WTC11 (cell line): ENCODE measurements at regions of chr7 and their contacts with region 1.

Region 1: DNA sequence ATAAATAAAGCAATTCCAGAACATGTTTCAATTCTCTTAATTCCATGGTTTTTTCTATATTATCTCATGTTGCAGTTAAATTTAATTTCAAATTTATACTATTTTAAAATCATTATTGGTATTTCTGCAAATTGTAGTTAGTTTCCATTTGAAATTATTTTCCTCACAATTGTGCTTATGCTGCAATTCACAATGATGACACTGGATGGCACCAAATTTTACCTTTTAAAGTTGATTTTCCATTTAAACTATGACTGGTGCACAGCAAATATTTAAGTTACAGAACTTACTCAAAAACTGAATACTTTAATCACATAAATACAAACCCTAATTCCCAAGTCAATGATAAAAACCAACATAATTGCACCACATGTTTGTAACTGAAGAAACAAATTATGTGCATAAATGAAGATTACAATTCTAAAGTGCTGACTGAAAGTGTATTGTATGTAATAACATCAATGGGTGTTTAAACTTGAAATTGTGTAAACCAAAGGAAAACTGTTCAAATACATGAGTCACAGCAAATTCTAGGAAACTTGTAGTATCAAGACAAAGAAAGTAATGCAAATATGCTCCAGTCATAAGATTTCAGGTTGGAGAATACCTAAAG is 75.3 kb upstream of the AASS start:
- DNase-seq: no peak
- ATAC-seq: no peak
- H3K4me3 Mint-ChIP-seq: no peak overlapping the region
- H3K27ac Mint-ChIP-seq: no peak overlapping the region
- H3K4me1 Mint-ChIP-seq: peaks cover 7% of the 10 kb centered on the region
- H3K27me3 Mint-ChIP-seq: no peaks in the 10 kb centered on the region
- CTCF ChIP-seq: peak; percentile 61

Region 2: DNA sequence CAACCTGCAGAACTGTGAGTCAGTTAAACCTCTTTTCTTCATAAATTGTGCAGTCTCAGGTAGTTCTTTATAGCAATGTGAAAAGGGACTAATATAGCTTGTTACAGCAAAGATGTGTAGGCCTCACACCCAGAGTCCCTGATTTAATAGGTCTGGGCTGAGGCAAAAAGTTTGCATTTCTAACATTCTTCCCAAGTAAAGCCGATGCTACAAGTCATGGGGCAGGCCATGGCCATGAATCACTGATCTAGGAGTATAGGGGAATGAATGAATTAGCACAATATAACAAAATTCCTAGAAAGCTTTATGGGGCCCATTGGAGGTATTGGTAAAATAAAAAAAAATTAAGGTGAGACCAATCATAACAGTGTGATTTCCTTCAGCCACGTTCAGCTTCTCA is 63.8 kb before region 1 on chr7:
- CTCF ChIA-PET with region 1: no interaction called
- POLR2A ChIA-PET with region 1: no interaction called
- DNase-seq: no peak
- ATAC-seq: no peak
- H3K4me3 Mint-ChIP-seq: no peak overlapping the region
- H3K27ac Mint-ChIP-seq: peak overlapping the region; percentile 91
- H3K4me1 Mint-ChIP-seq: peaks cover 70% of the 10 kb centered on the region
- H3K27me3 Mint-ChIP-seq: no peaks in the 10 kb centered on the region
- CTCF ChIP-seq: no peak

Region 3: GRCh38 chr7:122316467-122317388 is 97.4 kb after region 1 on chr7:
- CTCF ChIA-PET with region 1: no interaction called
- POLR2A ChIA-PET with region 1: no interaction called
- DNase-seq: peak; percentile 62
- ATAC-seq: peak; percentile 59
- H3K4me3 Mint-ChIP-seq: peak overlapping the region; percentile 70
- H3K27ac Mint-ChIP-seq: no peak overlapping the region
- H3K4me1 Mint-ChIP-seq: peaks cover 43% of the 10 kb centered on the region
- H3K27me3 Mint-ChIP-seq: peaks cover 73% of the 10 kb centered on the region
- CTCF ChIP-seq: no peak

Region 4: GRCh38 chr7:122532406-122533269 is 313.3 kb after region 1 on chr7:
- CTCF ChIA-PET with region 1: interaction called, 20 read pairs
- POLR2A ChIA-PET with region 1: no interaction called
- DNase-seq: peak; percentile 19
- ATAC-seq: peak; percentile 90
- H3K4me3 Mint-ChIP-seq: peak overlapping the region; percentile 30
- H3K27ac Mint-ChIP-seq: no peak overlapping the region; the same call in 1 of the 2 replicates
- H3K4me1 Mint-ChIP-seq: peaks cover 23% of the 10 kb centered on the region
- H3K27me3 Mint-ChIP-seq: no peaks in the 10 kb centered on the region
- CTCF ChIP-seq: peak; percentile 52